Left colon (tissue), 2 donors: ENCODE measurements at regions of chr11 and their contacts with region 1.

Region 1: GRCh38 chr11:46826310-46827044 is 19.6 kb downstream of the CKAP5 start:
- DNase-seq: peak; percentile 82 to 89
- ATAC-seq: peak; percentile 99

Region 2: GRCh38 chr11:46308631-46309419 is 517.7 kb before region 1 on chr11:
- intact Hi-C with region 1: no loop called
- DNase-seq: peak; percentile 59 to 85
- ATAC-seq: peak; percentile 78

Region 3: GRCh38 chr11:46845740-46846509 is 19.4 kb after region 1 on chr11 and contains the start of gene CKAP5:
- intact Hi-C with region 1: loop called in 1 of 2 experiments (anchors 2 kb)
- DNase-seq: peak; percentile 89 to 93
- ATAC-seq: peak; percentile 93
- total RNA-seq, gene CKAP5: 50.4 to 68.0 TPM

Region 4: DNA sequence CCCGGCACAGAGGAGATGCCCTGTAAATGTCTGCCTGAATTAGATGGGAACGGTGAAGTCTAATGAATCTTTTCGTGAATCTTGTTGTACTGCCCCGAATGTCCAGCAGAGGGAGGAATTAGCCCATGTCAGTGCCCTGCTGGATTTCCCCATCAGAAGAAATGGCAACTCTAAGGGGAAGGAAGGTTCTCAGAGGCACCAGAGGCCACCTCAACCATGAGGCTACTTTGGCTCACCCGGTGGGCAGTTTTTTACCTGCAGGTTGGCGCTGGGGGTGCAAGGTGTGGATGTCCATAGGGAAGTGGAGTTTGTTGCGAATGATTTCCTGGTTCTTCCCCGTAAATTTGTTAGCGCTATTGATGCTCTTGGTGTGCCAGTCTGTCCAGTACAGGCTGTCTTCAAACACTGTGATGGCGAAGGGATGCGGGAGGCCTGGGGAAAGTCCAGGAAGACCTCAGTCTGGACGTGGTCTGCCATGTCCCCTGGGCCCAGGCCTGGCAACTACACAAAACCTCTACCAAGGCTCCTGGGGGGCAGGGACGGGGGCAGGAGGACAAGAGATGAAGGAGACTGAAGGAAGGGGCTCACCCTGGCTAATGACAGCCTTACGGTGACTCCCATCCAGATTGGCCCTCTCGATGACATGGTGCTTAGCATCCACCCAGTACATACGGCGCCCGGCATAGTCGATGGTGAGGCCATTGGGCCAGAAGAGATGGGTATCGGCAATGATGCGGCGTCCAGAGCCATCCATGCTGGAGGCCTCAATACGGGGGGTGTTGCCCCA is 63.4 kb after region 1 on chr11:
- intact Hi-C with region 1: no loop called
- DNase-seq: peak; percentile 41 to 79
- ATAC-seq: peak; percentile 91